ENCODE measurements at regions of chr1 and their contacts with region 1.

Region 1: GRCh38 chr1:44775078-44775929 is at the start of gene RPS8:
- DNase-seq: peak; percentile 90
- H3K4me3 ChIP-seq: peak within 1 kb of the TSS; percentile 54 to 79
- H3K27ac ChIP-seq: peak within 1 kb of the TSS; percentile 84 to 87
- H3K4me1 ChIP-seq: peaks cover 14 to 16% of the 10 kb centered on the region in 2 experiments; a peak in 3 of 4 replicates
- H3K27me3 ChIP-seq: no peaks in the 10 kb centered on the region
- CTCF ChIP-seq: no peak
- EP300 ChIP-seq: no peak; a peak in 1 of 4 replicates
- RAD21 ChIP-seq: no peak
- polyA plus RNA-seq, gene RPS8: 3,303 and 3,363 TPM in 2 replicates

Region 2: GRCh38 chr1:44730741-44731512 is 44.4 kb before region 1 on chr1 and contains the start of gene RNU5D-1:
- CTCF ChIA-PET with region 1: interaction called, 16 read pairs
- POLR2A ChIA-PET with region 1: interaction called, 16 read pairs
- DNase-seq: peak; percentile 89
- H3K4me3 ChIP-seq: peak within 1 kb of the TSS; percentile 2 to 23; a peak in 2 of 4 replicates
- H3K27ac ChIP-seq: peak within 1 kb of the TSS; percentile 95 to 98
- H3K4me1 ChIP-seq: no peaks in the 10 kb centered on the region
- H3K27me3 ChIP-seq: no peaks in the 10 kb centered on the region
- CTCF ChIP-seq: peak; percentile 94
- EP300 ChIP-seq: peak; percentile 51 to 69; a peak in 3 of 4 replicates
- RAD21 ChIP-seq: peak; percentile 54
- polyA plus RNA-seq, gene RNU5D-1: not detected in 2 replicates

Region 3: DNA sequence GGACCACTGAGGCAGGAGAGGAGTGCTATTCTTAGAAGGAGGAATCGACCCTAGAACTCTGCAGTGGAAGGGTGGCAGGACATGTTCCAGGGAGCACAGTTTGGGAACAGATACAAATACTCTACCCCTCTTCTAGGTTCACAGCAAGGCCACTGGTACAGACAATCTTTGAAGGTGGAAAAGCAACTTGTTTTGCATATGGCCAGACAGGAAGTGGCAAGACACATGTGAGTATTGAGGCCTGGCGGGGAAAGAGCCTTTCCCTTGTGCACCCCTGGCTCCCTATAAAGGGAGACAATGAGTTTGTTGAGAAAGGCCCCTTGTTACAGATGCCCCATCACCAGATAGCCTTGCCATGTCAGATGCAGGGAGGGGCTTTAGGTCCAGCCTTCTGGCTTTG is 17.9 kb before region 1 on chr1:
- CTCF ChIA-PET with region 1: no interaction called
- POLR2A ChIA-PET with region 1: interaction called, 13 read pairs
- DNase-seq: no peak
- H3K4me3 ChIP-seq: no peak overlapping the region
- H3K27ac ChIP-seq: no peak overlapping the region
- H3K4me1 ChIP-seq: no peaks in the 10 kb centered on the region
- H3K27me3 ChIP-seq: no peaks in the 10 kb centered on the region
- CTCF ChIP-seq: no peak
- EP300 ChIP-seq: no peak
- RAD21 ChIP-seq: no peak

Region 4: DNA sequence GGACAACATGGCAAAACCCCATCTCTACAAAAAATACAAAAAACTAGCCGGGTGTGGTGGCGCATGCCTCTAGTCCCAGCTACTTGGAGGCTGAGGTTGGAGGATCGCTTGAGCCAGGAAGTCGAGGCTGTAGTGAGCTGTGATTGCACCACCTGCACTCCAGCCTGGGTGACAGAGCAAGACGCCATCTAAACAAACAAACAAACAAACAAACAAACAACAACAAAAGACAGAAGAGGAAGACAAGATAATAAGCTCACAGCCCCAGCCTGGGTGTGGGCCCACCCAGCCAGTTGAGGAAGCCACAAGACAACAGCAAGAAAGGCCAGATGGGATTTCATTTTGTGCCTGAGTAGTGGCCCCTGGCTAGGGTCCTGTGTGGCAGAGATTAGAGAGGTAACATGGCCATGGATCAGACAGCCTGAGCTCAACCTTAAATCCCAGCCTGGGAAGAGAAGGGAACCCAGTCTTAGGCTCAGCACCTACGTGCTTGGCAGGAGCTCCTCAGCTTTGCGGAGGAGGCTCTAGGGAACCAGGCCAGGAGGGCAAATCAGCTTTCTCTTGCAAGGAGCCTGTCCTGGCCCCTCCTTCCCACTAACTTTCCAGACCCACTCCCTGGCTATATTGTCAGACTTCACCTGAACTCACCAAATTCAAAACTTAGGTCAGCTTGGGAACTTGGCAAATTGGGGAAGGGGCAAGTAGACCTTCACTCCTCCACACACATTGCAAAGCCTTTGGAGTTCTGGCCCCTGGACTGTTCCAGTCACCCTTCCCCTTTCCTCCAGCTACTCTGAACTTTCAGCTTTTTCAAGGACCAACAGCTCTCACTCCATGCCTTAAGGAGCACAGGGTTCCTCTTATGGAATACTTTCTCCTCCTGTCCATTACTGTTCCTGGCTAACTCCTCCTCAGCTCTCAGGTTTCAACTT is 17.7 kb after region 1 on chr1:
- CTCF ChIA-PET with region 1: interaction called, 3 read pairs
- POLR2A ChIA-PET with region 1: interaction called, 13 read pairs
- DNase-seq: no peak
- H3K4me3 ChIP-seq: no peak overlapping the region
- H3K27ac ChIP-seq: no peak overlapping the region
- H3K4me1 ChIP-seq: peaks cover 0 to 5% of the 10 kb centered on the region in 2 experiments; a peak in 1 of 4 replicates
- H3K27me3 ChIP-seq: no peaks in the 10 kb centered on the region
- CTCF ChIP-seq: no peak
- EP300 ChIP-seq: no peak
- RAD21 ChIP-seq: no peak

Region 5: DNA sequence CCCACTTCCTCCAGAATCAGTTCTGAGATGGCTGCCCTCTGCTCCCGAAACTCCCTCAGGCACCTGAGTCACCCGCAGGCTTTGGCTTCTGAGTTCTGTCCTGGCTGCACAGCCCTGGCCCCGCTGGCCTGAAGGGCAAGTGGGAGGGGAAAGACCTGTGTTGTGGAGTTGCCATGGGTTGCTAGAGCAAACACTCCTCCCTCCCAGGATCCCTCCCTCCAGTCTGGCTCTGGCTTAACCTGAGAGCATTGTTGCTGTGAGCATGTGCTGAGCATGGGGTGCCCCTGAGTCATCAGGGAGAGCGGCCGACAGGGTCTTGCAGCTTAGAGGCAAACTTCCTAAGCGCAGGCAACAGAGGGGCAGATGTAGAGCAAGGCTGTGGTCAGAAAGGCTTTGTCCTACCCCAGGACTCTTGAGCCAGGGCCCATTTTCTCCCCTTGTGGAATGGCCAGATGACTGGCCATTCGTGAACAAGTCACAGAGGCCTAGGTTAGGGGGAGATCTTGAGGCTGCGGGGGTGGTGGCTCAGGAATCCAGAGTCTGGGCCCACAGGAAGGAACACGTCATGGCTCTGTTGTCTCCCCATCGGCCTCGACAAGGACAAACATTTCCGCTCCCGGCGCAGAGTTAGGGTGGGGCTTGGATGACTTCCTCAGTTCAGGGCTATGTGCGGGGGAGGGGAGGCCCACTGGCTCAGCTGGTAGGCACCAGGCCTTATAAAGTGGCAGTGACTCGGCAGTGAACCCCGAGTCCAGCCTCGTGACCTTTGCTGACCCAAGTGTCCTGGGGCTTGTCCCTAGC is 32.2 kb after region 1 on chr1 and contains the start of gene DYNLT4:
- CTCF ChIA-PET with region 1: interaction called, 4 read pairs
- POLR2A ChIA-PET with region 1: interaction called, 22 read pairs
- DNase-seq: peak; percentile 60
- H3K4me3 ChIP-seq: peak within 1 kb of the TSS; percentile 43 to 54; a peak in 3 of 4 replicates
- H3K27ac ChIP-seq: peak within 1 kb of the TSS; percentile 94 to 100
- H3K4me1 ChIP-seq: peaks cover 55 to 84% of the 10 kb centered on the region in 2 experiments; a peak in 3 of 4 replicates
- H3K27me3 ChIP-seq: no peaks in the 10 kb centered on the region
- CTCF ChIP-seq: no peak
- EP300 ChIP-seq: peak in 1 of 2 experiments; percentile 84; a peak in 2 of 4 replicates
- RAD21 ChIP-seq: no peak
- polyA plus RNA-seq, gene DYNLT4: 0.37 and 0.61 TPM in 2 replicates

Region 6: GRCh38 chr1:44812822-44813543 is 37.7 kb after region 1 on chr1:
- CTCF ChIA-PET with region 1: interaction called, 4 read pairs
- POLR2A ChIA-PET with region 1: interaction called, 22 read pairs
- DNase-seq: peak; percentile 70
- H3K4me3 ChIP-seq: peak overlapping the region in 1 of 2 experiments; percentile 38; a peak in 2 of 4 replicates
- H3K27ac ChIP-seq: peak overlapping the region; percentile 36 to 100; a peak in 2 of 4 replicates
- H3K4me1 ChIP-seq: peaks cover 42 to 60% of the 10 kb centered on the region in 2 experiments; a peak in 3 of 4 replicates
- H3K27me3 ChIP-seq: no peaks in the 10 kb centered on the region
- CTCF ChIP-seq: no peak
- EP300 ChIP-seq: no peak
- RAD21 ChIP-seq: no peak